ENCODE measurements at regions of chr12 and their contacts with region 1.

Region 1: GRCh38 chr12:66269757-66270383 is 32.4 kb upstream of the HELB start:
- DNase-seq: peak; percentile 48
- H3K4me3 ChIP-seq: no peak overlapping the region
- H3K27ac ChIP-seq: no peak overlapping the region
- H3K4me1 ChIP-seq: peaks cover 6% of the 10 kb centered on the region
- H3K27me3 ChIP-seq: peaks cover 3% of the 10 kb centered on the region
- CTCF ChIP-seq: peak; percentile 70 to 74

Region 2: DNA sequence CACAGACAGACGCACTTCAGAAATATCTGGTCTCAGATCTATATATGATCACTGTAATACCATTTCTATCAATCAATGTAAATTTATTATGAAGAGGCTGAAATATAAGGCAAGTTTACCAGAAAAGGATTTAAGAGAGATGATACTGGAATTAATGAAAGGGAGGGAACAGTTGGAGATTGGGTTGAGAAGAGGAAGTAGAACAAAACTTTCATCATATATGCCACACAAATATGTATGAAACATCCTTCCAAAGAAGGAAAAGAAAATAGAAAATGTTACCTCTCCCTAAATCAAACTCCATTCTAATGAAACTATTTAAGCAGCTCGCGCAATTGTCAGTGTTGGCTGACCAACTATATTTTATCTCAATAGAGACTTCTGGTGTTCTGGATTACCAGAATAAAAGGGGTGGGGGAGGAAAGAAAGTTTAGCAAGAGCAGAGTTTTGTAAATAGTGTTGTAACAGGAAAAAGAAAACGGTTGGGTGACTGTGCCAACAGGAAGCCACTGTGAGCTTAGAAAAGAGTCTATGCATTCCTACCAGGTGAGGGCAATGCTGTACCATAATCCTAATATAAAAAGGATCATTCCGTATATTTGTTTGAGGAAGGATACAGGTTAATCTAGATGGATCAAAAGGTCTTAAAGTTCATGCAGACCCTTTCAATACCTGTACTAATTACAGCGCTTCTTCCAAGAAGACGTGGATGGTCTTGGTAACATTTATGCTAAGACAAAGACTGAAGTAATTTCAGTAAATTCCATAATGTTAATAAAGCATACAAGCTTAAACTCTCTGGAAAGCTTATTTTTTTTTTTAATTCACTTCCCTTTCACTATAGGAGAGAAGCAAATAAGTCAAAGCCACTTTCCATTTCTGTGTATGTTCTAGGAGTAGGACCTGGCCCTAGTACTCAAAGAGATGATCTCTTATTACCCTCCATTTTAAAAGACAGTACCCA is 124.8 kb before region 1 on chr12:
- CTCF ChIA-PET with region 1: no interaction called
- dilution Hi-C with region 1: no loop called
- in situ Hi-C with region 1: no loop called
- intact Hi-C with region 1: loop called (anchors 10 kb)
- DNase-seq: peak; percentile 55
- H3K4me3 ChIP-seq: no peak overlapping the region
- H3K27ac ChIP-seq: no peak overlapping the region
- H3K4me1 ChIP-seq: no peaks in the 10 kb centered on the region
- H3K27me3 ChIP-seq: no peaks in the 10 kb centered on the region
- CTCF ChIP-seq: peak; percentile 76

Region 3: DNA sequence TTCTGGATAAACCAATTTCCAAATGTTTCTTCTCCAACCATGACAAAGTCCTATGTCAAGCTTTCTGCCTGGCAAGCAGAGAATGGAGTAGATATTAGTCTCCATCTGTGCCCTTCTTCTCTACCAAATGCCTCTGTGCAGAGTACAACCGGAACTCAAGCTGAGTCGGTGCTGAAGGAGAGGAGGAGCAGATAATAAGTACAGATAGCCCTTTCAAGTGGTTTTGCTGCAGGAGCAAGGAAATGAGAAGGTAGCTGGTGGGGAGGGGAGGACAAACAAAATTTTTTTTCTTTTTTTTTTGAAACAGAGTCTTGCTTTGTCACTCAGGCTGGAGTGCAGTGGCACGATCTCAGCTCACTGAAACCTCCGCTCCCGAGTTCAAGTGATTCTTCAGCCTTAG is 18.3 kb after region 1 on chr12:
- CTCF ChIA-PET with region 1: interaction called, 18 read pairs
- dilution Hi-C with region 1: no loop called
- in situ Hi-C with region 1: no loop called
- intact Hi-C with region 1: no loop called
- DNase-seq: no peak
- H3K4me3 ChIP-seq: no peak overlapping the region
- H3K27ac ChIP-seq: no peak overlapping the region
- H3K4me1 ChIP-seq: peaks cover 3% of the 10 kb centered on the region
- H3K27me3 ChIP-seq: no peaks in the 10 kb centered on the region
- CTCF ChIP-seq: no peak

Region 4: GRCh38 chr12:66693901-66694675 is 424.2 kb after region 1 on chr12:
- CTCF ChIA-PET with region 1: no interaction called
- dilution Hi-C with region 1: no loop called
- in situ Hi-C with region 1: no loop called
- intact Hi-C with region 1: loop called (anchors 5 kb)
- DNase-seq: peak; percentile 49
- H3K4me3 ChIP-seq: no peak overlapping the region
- H3K27ac ChIP-seq: no peak overlapping the region
- H3K4me1 ChIP-seq: no peaks in the 10 kb centered on the region
- H3K27me3 ChIP-seq: no peaks in the 10 kb centered on the region
- CTCF ChIP-seq: peak; percentile 47 to 68

Region 5: GRCh38 chr12:66708704-66709456 is 439.0 kb after region 1 on chr12:
- CTCF ChIA-PET with region 1: no interaction called
- dilution Hi-C with region 1: no loop called
- in situ Hi-C with region 1: loop called in 1 of 2 experiments (anchors 25 kb)
- intact Hi-C with region 1: no loop called
- DNase-seq: no peak
- H3K4me3 ChIP-seq: no peak overlapping the region
- H3K27ac ChIP-seq: no peak overlapping the region
- H3K4me1 ChIP-seq: no peaks in the 10 kb centered on the region
- H3K27me3 ChIP-seq: no peaks in the 10 kb centered on the region
- CTCF ChIP-seq: peak; percentile 33 to 38